ENCODE measurements at regions of chr14 and their contacts with region 1.

Region 1: GRCh38 chr14:49767562-49768300 is at the start of gene KLHDC2:
- DNase-seq: peak; percentile 71 to 90
- H3K4me3 ChIP-seq: peak within 1 kb of the TSS; percentile 100
- H3K27ac ChIP-seq: peak within 1 kb of the TSS; percentile 84
- H3K4me1 ChIP-seq: peaks cover 36% of the 10 kb centered on the region
- H3K27me3 ChIP-seq: no peaks in the 10 kb centered on the region
- CTCF ChIP-seq: 0 out of 2 replicates have a peak, but pooled peaks have one; percentile 10
- total RNA-seq, gene KLHDC2: 45.3 and 45.8 TPM in 2 replicates

Region 2: DNA sequence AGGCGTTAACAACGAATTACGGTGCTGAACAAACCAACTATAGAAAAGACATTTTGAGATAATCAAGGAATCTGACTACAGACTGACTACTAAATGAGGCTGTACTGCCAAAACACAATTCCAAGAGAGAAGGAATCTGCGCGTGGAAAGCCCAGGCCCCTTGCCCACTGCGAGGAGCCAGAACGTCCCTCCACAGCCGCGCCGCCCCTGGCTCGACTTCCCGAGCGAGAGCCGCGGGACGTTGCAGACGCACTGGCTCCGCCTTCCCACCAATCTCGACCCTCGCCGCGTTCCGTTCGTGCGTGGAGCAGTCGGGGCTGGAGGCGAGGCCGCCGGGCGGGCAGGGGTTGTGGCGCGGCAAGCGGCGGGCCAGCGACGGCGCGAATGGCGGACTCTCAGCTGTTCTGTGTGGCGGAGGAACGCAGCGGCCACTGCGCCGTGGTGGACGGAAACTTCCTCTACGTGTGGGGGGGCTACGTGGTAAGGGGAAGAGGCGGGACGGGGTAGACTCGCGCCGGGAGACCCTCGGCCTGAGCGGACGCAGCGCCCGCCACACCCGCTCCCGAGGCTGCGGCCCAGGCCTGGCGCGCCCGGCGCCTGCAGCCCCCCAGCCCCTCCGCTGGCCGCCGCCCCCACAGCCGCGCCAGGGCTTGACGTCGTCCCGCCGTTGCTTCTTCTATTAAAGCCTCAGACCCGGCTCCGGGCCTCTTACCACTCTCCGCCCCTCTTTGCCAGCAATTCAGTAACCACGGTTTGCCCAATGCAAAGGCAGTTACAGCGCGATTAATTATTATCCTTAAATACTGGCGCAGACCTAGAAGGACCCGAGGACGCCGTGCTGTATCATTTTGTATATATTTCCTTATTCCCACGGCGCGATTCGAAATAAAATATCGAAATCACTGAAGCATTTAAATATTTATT is 74.7 kb before region 1 on chr14 and contains the start of gene KLHDC1:
- CTCF ChIA-PET with region 1: interaction called, 11 read pairs
- POLR2A ChIA-PET with region 1: no interaction called
- intact Hi-C with region 1: loop called (anchors 1 kb)
- DNase-seq: peak in 1 of 2 experiments; percentile 50
- H3K4me3 ChIP-seq: peak within 1 kb of the TSS; percentile 73
- H3K27ac ChIP-seq: no peak within 1 kb of the TSS
- H3K4me1 ChIP-seq: no peaks in the 10 kb centered on the region
- H3K27me3 ChIP-seq: no peaks in the 10 kb centered on the region
- CTCF ChIP-seq: no peak
- total RNA-seq, gene KLHDC1: 1.2 and 3.8 TPM in 2 replicates